Aorta (tissue), 5 donors: ENCODE measurements at regions of chr17 and their contacts with region 1.

Region 1: GRCh38 chr17:76868176-76868668 is at the start of gene MGAT5B:
- DNase-seq: peak; percentile 84 to 93
- ATAC-seq: peak; percentile 93
- H3K4me3 ChIP-seq: peak within 1 kb of the TSS; percentile 22 to 52
- H3K27ac ChIP-seq: no peak within 1 kb of the TSS
- H3K4me1 ChIP-seq: no peaks in the 10 kb centered on the region
- H3K27me3 ChIP-seq: no peaks in the 10 kb centered on the region
- total RNA-seq, gene MGAT5B: 0.51 to 0.55 TPM

Region 2: GRCh38 chr17:76530095-76530718 is 338.0 kb before region 1 on chr17:
- intact Hi-C with region 1: no loop called
- DNase-seq: peak; percentile 71 to 85
- ATAC-seq: peak; percentile 73
- H3K4me3 ChIP-seq: no peak overlapping the region
- H3K27ac ChIP-seq: no peak overlapping the region
- H3K4me1 ChIP-seq: no peaks in the 10 kb centered on the region
- H3K27me3 ChIP-seq: no peaks in the 10 kb centered on the region

Region 3: DNA sequence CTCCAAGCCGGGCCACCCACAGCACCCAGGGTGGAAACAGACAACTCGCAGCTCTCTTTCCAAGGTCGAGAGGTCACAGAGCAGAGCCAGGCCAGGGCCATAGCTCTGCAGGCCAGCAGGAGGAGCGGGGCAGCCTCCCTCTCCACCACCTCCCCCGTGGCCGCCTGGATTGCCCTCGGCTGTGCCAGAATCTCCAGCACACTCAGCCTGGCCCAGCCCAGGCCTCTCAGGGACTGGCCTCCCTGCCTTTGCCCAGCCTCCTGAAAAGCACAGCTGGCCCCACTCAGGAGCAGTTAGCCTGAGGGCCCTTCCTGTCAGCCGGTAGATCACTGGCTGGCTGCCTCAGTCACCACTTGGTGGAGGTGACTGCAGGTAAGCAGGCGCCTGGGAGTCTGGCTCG is 186.7 kb after region 1 on chr17:
- intact Hi-C with region 1: loop called in 1 of 2 experiments (anchors 2 kb)
- DNase-seq: no peak
- ATAC-seq: no peak
- H3K4me3 ChIP-seq: no peak overlapping the region
- H3K27ac ChIP-seq: no peak overlapping the region
- H3K4me1 ChIP-seq: no peaks in the 10 kb centered on the region
- H3K27me3 ChIP-seq: no peaks in the 10 kb centered on the region

Region 4: GRCh38 chr17:77066165-77066564 is 197.9 kb after region 1 on chr17:
- intact Hi-C with region 1: loop called (anchors 2 kb)
- DNase-seq: no peak
- ATAC-seq: no peak
- H3K4me3 ChIP-seq: no peak overlapping the region
- H3K27ac ChIP-seq: no peak overlapping the region
- H3K4me1 ChIP-seq: no peaks in the 10 kb centered on the region
- H3K27me3 ChIP-seq: no peaks in the 10 kb centered on the region